ENCODE measurements at regions of chr2 and their contacts with region 1.

Region 1: DNA sequence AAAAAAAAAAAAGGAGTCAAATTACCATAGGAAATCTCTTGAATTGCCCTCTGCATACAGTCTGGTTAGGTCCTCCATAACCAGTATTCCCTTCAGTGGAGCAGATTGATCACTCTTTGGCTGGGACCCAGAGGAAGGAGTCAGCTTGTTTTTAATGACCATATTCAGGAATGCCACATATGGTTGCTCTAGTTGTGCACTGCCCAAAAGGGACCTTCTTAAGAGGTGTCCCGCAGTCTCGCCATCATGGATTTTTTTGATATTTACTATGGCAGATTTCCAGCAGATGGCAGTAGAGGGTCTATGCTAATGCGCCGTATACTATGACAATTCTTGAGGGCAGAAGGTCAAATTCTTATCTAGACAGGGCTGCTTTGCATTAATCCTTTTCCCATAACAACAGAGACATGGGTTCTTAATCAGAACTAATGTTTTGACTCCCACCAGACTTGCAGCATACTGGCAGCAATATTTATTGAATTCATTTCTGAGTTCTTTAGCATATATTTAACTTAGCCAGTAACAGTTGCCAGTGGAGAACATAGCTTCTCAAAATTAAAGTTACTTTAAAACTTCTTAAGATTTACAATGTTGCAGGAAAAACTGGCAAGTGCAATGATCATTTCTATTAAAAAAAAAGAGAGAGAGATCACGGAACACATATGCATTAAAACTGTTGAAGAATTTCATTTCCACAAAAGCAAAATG is 31.8 kb upstream of the INPP4A start:
- DNase-seq: peak; percentile 49
- H3K4me3 Mint-ChIP-seq: no peak overlapping the region
- H3K27ac Mint-ChIP-seq: no peak overlapping the region
- H3K4me1 Mint-ChIP-seq: peaks cover 13% of the 10 kb centered on the region
- H3K27me3 Mint-ChIP-seq: peaks cover 2% of the 10 kb centered on the region

Region 2: DNA sequence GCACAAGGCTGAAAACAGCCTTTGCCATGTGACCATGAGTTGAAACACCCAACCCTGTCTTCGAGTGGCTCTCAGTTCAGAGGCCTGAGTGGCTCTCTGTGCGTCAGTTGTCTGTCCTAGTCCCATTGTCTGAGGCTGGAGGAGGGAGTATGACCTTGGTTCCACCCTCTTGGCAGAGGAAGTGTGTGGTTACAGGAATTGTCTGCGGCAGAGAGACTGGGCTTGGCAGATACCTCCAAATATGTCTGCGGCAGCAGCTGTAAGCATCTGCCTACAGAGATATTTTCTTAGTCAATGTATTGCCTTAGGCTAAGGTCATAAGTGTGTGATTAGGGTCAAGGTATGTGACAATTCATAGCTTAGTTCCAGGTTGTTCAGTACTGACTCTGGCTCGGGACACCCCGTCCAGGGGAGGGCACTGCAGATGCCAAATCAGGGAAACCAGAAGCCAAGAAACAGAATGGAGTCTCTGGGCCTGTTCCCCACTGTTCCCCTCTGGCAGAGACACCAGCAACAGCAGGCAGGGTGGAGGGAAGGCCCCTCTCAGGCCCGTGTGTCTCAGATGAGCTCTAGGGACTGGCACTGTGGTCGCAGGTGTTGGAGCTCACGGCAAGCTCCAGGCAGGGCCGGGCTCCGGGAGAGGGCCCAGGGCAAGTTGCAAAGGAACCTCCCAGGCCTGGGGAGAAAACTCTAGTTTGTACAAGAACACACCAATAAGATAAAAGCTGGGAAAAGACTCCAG is 33.8 kb before region 1 on chr2:
- intact Hi-C with region 1: no loop called
- DNase-seq: no peak
- H3K4me3 Mint-ChIP-seq: no peak overlapping the region
- H3K27ac Mint-ChIP-seq: no peak overlapping the region
- H3K4me1 Mint-ChIP-seq: no peaks in the 10 kb centered on the region
- H3K27me3 Mint-ChIP-seq: peaks cover 13% of the 10 kb centered on the region

Region 3: DNA sequence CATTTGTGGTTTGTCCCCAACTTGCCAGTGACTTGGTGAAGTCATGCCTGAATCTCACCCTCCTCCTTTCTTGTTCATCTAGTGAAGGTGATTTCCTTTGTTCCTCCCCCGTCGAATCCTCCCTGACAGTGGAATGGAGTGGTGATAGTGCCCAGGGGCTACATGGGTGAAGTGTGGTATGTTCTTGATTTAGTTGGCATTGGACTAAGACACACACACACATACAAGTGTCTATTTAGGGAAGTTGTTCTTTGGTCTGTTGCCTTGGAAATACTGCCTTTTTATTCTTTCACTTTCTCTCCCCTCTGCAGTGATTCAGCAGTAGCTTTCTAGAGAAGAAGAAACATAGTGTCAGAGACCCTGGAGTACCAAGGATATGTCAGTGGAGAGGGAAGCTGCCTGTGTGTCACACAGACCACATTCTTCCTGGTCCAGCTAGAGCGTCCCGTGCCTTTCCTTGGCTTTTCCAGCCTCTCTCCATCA is 42.6 kb after region 1 on chr2:
- intact Hi-C with region 1: loop called (anchors 1 kb)
- DNase-seq: no peak
- H3K4me3 Mint-ChIP-seq: peak overlapping the region; percentile 68
- H3K27ac Mint-ChIP-seq: peak overlapping the region; percentile 98
- H3K4me1 Mint-ChIP-seq: peaks cover 97% of the 10 kb centered on the region
- H3K27me3 Mint-ChIP-seq: no peaks in the 10 kb centered on the region

Region 4: GRCh38 chr2:98518090-98518489 is 105.2 kb after region 1 on chr2:
- intact Hi-C with region 1: loop called (anchors 1 kb)
- DNase-seq: peak; percentile 26
- H3K4me3 Mint-ChIP-seq: no peak overlapping the region
- H3K27ac Mint-ChIP-seq: no peak overlapping the region
- H3K4me1 Mint-ChIP-seq: peaks cover 69% of the 10 kb centered on the region
- H3K27me3 Mint-ChIP-seq: no peaks in the 10 kb centered on the region

Region 5: GRCh38 chr2:98548920-98549818 is 136.3 kb after region 1 on chr2:
- intact Hi-C with region 1: loop called (anchors 10 kb)
- DNase-seq: no peak
- H3K4me3 Mint-ChIP-seq: peak overlapping the region; percentile 9
- H3K27ac Mint-ChIP-seq: peak overlapping the region; percentile 35
- H3K4me1 Mint-ChIP-seq: peaks cover 72% of the 10 kb centered on the region
- H3K27me3 Mint-ChIP-seq: no peaks in the 10 kb centered on the region

Region 6: DNA sequence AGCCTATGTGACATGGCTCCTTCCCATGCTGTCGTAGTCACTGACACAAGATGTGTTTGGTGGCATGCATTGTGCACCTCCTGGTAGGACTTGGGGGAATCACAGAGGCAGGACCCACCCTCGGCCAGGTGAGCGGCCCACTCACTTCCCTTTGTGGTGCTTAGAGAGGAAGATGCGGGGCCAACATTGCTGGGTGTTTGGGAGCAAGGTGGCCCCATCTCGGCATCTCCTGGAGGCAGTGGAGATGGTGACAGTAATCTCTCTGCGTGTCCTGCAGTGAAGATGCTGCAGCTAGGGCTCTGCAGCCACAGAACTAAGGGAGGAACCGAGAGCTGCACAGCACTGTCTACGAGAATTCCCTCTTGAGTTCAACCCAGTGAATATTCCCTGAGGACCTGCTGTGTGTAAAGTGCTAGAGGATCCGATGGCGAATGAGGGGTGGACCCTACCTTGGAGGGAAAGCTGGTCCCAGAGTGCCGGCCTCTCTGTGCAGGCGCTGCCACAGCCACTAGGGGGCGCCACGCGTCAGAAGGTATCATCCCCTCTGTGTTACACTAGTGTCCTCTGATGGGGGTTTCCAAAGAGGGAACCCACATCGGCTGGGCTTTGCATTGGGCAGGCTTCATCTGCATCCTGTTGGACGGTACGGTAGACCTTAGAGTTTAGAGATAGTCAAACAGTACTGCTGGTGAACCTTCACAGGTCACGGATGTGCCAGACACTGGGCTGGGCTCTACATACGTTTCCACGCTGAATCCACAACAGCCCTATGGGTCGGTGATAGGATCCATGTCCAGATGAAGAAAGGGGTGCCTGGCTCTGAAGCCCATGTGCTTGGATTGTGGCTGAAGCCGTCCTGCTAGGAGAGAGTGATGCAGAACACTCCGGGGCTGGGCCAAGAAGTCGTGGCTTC is 156.2 kb after region 1 on chr2:
- intact Hi-C with region 1: loop called (anchors 1 kb)
- DNase-seq: peak; percentile 44
- H3K4me3 Mint-ChIP-seq: no peak overlapping the region
- H3K27ac Mint-ChIP-seq: peak overlapping the region; percentile 24
- H3K4me1 Mint-ChIP-seq: peaks cover 12% of the 10 kb centered on the region
- H3K27me3 Mint-ChIP-seq: no peaks in the 10 kb centered on the region

Region 7: GRCh38 chr2:98601532-98602132 is 188.7 kb after region 1 on chr2:
- intact Hi-C with region 1: loop called (anchors 1 kb)
- DNase-seq: no peak
- H3K4me3 Mint-ChIP-seq: no peak overlapping the region
- H3K27ac Mint-ChIP-seq: no peak overlapping the region
- H3K4me1 Mint-ChIP-seq: peaks cover 35% of the 10 kb centered on the region
- H3K27me3 Mint-ChIP-seq: no peaks in the 10 kb centered on the region

Region 8: GRCh38 chr2:98835831-98836385 is 423.0 kb after region 1 on chr2:
- intact Hi-C with region 1: loop called (anchors 2 kb)
- DNase-seq: peak; percentile 24
- H3K4me3 Mint-ChIP-seq: peak overlapping the region; percentile 38
- H3K27ac Mint-ChIP-seq: peak overlapping the region; percentile 56
- H3K4me1 Mint-ChIP-seq: peaks cover 53% of the 10 kb centered on the region
- H3K27me3 Mint-ChIP-seq: peaks cover 6% of the 10 kb centered on the region